Gastrocnemius medialis (tissue), 4 donors: ENCODE measurements at regions of chrX and their contacts with region 1.

Region 1: DNA sequence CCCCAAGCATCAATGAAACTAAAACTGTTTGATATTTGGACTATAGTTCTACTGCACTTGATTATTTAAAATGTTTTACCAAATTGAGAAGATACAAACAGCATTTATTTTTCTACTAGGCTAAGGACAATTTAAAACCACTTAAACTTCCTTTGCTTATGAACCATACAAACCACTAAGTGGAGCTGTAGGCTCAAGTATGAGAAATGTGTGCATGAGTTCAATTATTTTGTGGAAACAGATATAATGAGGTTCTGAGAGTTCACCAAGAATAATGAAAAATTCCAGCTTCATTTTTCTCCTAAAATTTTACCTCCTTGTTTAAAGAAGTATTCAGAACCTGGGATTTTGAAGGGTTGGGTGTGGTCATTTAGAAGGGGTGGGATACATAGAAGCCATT is 63.1 kb downstream of the SERPINA7 start:
- DNase-seq: no peak
- ATAC-seq: no peak
- H3K4me3 ChIP-seq: no peak overlapping the region
- H3K27ac ChIP-seq: no peak overlapping the region
- H3K4me1 ChIP-seq: no peaks in the 10 kb centered on the region
- H3K27me3 ChIP-seq: no peaks in the 10 kb centered on the region
- CTCF ChIP-seq: no peak
- POLR2A ChIP-seq: no peak

Region 2: DNA sequence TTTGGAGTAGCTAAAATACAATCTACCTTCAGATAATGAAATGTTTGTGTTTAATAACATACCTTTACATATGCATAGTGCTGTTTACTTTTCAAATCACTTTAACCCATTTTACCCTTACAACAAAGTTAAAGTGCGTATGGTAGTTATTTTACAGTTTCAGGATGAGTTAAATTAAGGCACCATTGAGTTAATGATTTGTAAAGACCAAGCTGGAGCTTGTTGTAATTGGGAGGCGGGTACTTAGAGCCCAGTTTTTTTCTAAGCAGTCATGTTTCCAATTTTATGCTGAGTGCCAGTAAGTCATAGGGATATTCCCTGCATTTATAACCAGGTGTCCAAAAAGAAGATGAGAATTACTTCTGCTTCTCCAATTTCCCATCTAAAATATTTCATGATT is 237.2 kb before region 1 on chrX:
- in situ Hi-C with region 1: no loop called
- intact Hi-C with region 1: no loop called
- DNase-seq: no peak
- ATAC-seq: no peak
- H3K4me3 ChIP-seq: no peak overlapping the region
- H3K27ac ChIP-seq: no peak overlapping the region
- H3K4me1 ChIP-seq: no peaks in the 10 kb centered on the region
- H3K27me3 ChIP-seq: no peaks in the 10 kb centered on the region
- CTCF ChIP-seq: no peak
- POLR2A ChIP-seq: no peak

Region 3: GRCh38 chrX:106397801-106398538 is 422.6 kb after region 1 on chrX:
- in situ Hi-C with region 1: no loop called
- intact Hi-C with region 1: loop called (anchors 5 kb)
- DNase-seq: no peak
- ATAC-seq: no peak
- H3K4me3 ChIP-seq: no peak overlapping the region
- H3K27ac ChIP-seq: no peak overlapping the region
- H3K4me1 ChIP-seq: no peaks in the 10 kb centered on the region
- H3K27me3 ChIP-seq: no peaks in the 10 kb centered on the region
- CTCF ChIP-seq: peak in 2 of 5 experiments; percentile 8 to 24
- POLR2A ChIP-seq: no peak